Dendritic cell treated with granulocyte-macrophage colony-stimulating factor and Interleukin-4, amounts not matched to agents 40 ng/mL and 50 ng/mL, for 4 days (primary cell): ENCODE measurements at regions of chr5 and their contacts with region 1.

Region 1: DNA sequence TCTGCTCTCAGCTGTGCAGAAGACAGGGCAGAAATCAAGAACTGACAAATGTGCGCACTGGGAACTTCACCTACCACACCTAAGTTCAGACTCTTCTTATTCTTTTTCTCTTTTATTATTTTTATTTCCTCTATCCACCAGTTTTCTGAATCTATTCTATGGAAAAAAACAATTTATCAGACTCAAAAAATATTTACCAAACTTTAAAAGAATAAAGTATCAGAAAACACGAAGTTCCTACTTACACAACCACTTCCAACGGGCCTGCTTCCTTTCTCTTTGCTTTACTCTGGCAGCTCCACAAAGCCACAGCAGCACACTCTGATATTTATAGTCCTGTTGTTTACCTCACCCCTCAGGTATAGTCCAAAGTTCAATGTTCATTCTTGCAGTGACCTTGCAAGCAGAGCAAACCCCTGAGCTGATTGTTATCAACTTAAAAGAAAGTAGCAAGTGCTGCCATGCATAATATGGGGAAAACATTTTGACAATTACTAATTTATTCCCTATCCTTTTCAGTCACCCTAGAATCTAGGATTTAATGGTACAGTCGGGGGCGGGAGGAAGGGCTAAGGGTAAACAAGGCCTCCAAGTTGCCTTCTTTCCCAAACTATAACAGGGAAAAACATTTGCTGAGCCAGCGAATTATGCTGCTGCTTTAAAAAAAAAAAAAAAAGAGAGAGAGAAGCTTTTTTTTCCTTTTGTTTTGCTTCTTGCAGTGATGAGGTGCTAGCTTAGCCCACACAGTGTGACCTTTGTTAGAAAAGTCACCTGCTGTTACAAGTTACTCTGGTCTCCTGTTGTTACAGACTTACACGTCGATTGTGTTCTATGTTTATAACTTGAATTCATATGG is at the start of gene SELENOP:
- H3K4me3 Mint-ChIP-seq: peak within 1 kb of the TSS; percentile 79
- H3K27ac Mint-ChIP-seq: peak within 1 kb of the TSS; percentile 78
- H3K4me1 Mint-ChIP-seq: peaks cover 10% of the 10 kb centered on the region
- H3K27me3 Mint-ChIP-seq: no peaks in the 10 kb centered on the region

Region 2: DNA sequence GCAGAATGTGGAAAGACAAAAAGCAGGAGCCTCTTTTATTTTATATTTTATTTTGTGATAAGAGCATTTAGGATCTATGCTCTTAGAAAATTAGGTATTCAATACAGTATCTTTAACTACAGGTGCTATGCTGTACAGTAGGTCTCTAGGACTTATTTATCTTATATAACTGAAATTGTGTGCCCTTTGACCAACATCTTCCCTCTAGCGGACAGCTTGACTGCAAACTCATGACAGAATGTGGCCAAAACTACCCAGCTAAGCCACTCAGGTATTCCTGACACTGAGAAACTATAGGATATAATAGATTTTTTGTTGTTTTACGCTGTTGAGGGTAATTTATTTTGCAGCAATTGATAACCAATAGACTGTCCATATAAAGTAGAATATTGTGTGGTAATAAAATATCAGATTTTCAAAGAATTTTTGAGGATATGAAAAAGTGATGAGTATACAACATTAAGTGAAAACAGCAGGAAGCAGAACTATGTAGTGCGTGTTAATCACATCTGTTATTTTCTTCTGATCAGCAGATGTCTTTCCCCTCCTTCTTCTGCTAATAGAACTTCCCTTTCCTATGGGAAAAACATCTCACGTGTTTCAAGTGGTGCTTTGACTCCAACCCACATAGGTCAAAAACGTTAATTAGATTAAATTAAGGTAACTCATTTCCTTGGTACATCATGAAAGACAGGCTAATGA is 69.7 kb after region 1 on chr5:
- intact Hi-C with region 1: loop called (anchors 2 kb)
- H3K4me3 Mint-ChIP-seq: no peak overlapping the region
- H3K27ac Mint-ChIP-seq: peak overlapping the region; percentile 57
- H3K4me1 Mint-ChIP-seq: peaks cover 17% of the 10 kb centered on the region
- H3K27me3 Mint-ChIP-seq: no peaks in the 10 kb centered on the region